ENCODE measurements at regions of chr7 and their contacts with region 1.

Region 1: GRCh38 chr7:49001610-49002033 is 77.3 kb downstream of the CDC14C start:
- DNase-seq: peak; percentile 56 to 64
- H3K4me3 ChIP-seq: no peak overlapping the region
- H3K4me3 Mint-ChIP-seq: no peak overlapping the region
- H3K27ac Mint-ChIP-seq: no peak overlapping the region
- H3K4me1 ChIP-seq: no peaks in the 10 kb centered on the region
- H3K4me1 Mint-ChIP-seq: no peaks in the 10 kb centered on the region
- H3K27me3 ChIP-seq: no peaks in the 10 kb centered on the region
- H3K27me3 Mint-ChIP-seq: no peaks in the 10 kb centered on the region
- CTCF ChIP-seq: peak; percentile 60 to 70

Region 2: DNA sequence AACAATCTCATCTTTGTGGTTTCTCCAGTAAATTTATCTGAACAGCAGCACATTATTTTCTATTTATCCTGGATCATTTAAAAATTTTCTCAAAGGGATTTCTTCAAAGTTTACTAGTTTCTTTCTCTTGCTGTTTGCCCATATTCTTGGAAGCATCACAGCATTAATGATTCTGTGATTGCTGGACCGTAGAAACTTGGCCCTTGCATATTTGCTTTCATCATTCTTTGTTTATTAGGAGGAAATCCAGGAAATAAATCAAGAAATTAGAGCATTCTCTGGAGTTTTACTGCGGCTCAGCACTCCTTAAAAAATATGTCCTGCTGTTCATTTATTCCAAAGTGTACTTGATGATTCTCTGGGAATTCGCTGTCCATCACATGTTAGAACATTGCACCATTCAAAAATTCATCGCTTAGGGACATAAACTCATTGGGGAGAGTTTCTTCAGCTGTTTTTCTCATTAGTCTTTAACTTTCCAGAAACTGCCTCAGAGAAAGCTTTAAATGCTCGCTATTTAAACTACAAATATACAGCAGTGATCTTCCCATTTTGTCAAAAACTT is 341.2 kb before region 1 on chr7:
- CTCF ChIA-PET with region 1: no interaction called
- POLR2A ChIA-PET with region 1: no interaction called
- intact Hi-C with region 1: no loop called
- DNase-seq: no peak
- H3K4me3 ChIP-seq: no peak overlapping the region
- H3K4me3 Mint-ChIP-seq: no peak overlapping the region
- H3K27ac Mint-ChIP-seq: no peak overlapping the region
- H3K4me1 ChIP-seq: no peaks in the 10 kb centered on the region
- H3K4me1 Mint-ChIP-seq: no peaks in the 10 kb centered on the region
- H3K27me3 ChIP-seq: no peaks in the 10 kb centered on the region
- H3K27me3 Mint-ChIP-seq: no peaks in the 10 kb centered on the region
- CTCF ChIP-seq: no peak

Region 3: DNA sequence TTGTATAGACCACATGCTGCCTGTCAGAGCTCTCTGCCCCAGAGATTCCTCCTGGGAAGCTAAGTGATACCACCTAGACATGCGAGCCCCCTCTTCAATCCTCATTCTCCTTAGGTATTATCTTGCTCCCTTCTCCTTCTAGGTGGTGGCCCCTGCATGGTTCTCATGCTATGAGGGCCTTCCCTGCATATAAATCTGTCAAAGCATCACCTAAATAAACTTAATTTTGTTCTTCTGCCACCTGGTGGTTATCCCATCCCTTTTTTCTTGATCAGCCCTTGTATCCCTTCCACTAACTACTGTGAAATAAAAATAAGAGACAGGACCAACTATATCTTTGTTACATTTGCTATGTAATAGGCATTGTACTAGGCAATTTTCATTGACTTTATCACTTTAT is 164.8 kb after region 1 on chr7:
- CTCF ChIA-PET with region 1: interaction called, 3 read pairs
- POLR2A ChIA-PET with region 1: no interaction called
- intact Hi-C with region 1: loop called (anchors 1 kb)
- DNase-seq: peak in 1 of 2 experiments; percentile 9
- H3K4me3 ChIP-seq: no peak overlapping the region
- H3K4me3 Mint-ChIP-seq: no peak overlapping the region
- H3K27ac Mint-ChIP-seq: no peak overlapping the region
- H3K4me1 ChIP-seq: no peaks in the 10 kb centered on the region
- H3K4me1 Mint-ChIP-seq: no peaks in the 10 kb centered on the region
- H3K27me3 ChIP-seq: no peaks in the 10 kb centered on the region
- H3K27me3 Mint-ChIP-seq: peaks cover 13% of the 10 kb centered on the region
- CTCF ChIP-seq: peak; percentile 23 to 49

Region 4: DNA sequence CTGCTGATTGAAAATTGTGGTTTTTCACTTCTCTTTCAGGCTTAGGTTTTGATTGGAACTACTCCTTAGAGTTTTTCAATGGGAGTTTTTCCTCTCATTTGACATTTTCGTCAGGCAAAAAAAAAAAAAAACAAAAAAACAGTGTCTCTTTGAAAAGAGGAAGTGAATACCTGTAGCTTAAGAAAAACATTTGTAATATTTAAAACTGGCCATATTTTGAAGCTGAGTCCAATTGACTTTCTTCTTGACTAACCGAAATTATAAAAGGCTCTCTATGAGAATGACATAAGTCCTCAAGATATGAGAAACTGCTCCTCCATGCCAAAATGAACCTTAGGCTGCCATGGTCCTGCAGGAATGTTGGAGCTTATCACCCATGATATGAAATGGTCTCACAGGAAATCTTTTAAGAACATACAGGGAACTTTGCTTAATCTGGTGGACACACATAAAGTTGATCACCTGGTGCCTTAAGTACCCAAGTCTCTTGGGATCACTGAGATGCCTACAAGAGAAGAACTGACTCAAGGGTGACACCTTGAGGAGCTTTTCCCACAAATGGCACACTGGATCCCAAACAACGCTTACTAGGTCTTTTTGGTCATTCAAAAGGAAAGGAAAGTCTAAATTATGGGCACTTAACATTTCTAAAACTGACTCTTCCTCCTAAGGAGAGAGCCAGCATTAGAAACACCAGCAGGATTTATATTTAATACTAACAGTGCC is 186.1 kb after region 1 on chr7:
- CTCF ChIA-PET with region 1: interaction called, 6 read pairs
- POLR2A ChIA-PET with region 1: no interaction called
- intact Hi-C with region 1: loop called (anchors 1 kb)
- DNase-seq: peak in 1 of 2 experiments; percentile 5
- H3K4me3 ChIP-seq: no peak overlapping the region
- H3K4me3 Mint-ChIP-seq: no peak overlapping the region
- H3K27ac Mint-ChIP-seq: no peak overlapping the region
- H3K4me1 ChIP-seq: no peaks in the 10 kb centered on the region
- H3K4me1 Mint-ChIP-seq: no peaks in the 10 kb centered on the region
- H3K27me3 ChIP-seq: no peaks in the 10 kb centered on the region
- H3K27me3 Mint-ChIP-seq: no peaks in the 10 kb centered on the region
- CTCF ChIP-seq: peak in 1 of 2 experiments; percentile 35

Region 5: GRCh38 chr7:49791088-49791741 is 789.6 kb after region 1 on chr7:
- CTCF ChIA-PET with region 1: interaction called, 3 read pairs
- POLR2A ChIA-PET with region 1: no interaction called
- intact Hi-C with region 1: loop called (anchors 1 kb)
- DNase-seq: peak in 1 of 2 experiments; percentile 38
- H3K4me3 ChIP-seq: no peak overlapping the region
- H3K4me3 Mint-ChIP-seq: no peak overlapping the region
- H3K27ac Mint-ChIP-seq: no peak overlapping the region
- H3K4me1 ChIP-seq: no peaks in the 10 kb centered on the region
- H3K4me1 Mint-ChIP-seq: no peaks in the 10 kb centered on the region
- H3K27me3 ChIP-seq: no peaks in the 10 kb centered on the region; the same call in 1 of the 2 replicates
- H3K27me3 Mint-ChIP-seq: peaks cover 9% of the 10 kb centered on the region
- CTCF ChIP-seq: peak; percentile 44 to 55

Measured in Caco-2 (cell line).